ENCODE measurements at regions of chr5 and their contacts with region 1.

Region 1: DNA sequence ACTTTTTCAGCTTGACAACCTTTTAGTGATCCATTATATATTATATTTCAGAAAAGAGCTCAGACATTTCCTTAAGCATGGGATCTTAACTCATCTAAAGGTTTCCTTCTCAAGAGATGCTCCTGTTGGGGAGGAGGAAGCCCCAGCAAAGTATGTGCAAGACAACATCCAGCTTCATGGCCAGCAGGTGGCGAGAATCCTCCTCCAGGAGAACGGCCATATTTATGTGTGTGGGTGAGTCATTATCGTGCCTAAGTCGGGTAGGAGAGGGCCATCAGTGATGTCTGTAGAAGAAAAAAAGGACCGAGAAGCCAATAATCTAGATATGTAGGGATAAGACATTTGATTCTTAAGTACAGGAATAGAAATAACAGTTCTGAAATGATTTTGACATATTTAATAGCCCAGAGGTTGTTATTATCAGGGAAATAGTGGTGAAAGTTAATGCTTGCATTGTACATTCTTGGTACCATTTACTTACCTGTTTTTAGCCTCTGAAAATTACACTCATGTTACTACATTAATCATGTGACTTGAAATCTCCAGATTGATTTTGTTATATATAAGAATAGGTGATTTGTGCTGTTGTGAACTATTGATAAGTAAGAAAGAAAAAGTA is 28.2 kb downstream of the MTRR start:
- DNase-seq: peak; percentile 44
- H3K4me3 ChIP-seq: no peak overlapping the region
- H3K27ac ChIP-seq: no peak overlapping the region
- H3K4me1 ChIP-seq: no peaks in the 10 kb centered on the region
- H3K27me3 ChIP-seq: no peaks in the 10 kb centered on the region
- CTCF ChIP-seq: peak; percentile 47 to 48
- POLR2A ChIP-seq: no peak

Region 2: DNA sequence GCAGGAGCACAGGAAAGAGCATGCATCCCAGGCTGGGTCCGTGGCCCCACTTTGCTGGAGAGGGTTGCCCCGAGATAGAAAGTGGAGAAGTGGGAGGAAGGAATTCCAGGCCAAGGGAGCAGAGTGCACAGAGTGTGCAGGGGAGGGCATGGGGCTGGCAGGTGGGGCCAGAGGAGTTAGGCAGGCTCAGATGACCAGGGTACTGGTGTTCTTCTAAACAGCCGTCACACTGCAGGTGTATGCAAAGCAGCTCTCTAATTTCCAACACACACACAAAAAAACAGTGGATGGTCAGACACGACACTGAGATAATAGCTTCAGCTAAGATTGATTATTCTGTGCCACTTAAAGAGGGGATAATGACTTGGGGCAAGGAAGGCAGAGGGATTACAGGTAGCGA is 184.1 kb after region 1 on chr5:
- CTCF ChIA-PET with region 1: no interaction called
- POLR2A ChIA-PET with region 1: no interaction called
- dilution Hi-C with region 1: no loop called
- intact Hi-C with region 1: no loop called
- DNase-seq: no peak
- H3K4me3 ChIP-seq: no peak overlapping the region
- H3K27ac ChIP-seq: no peak overlapping the region
- H3K4me1 ChIP-seq: no peaks in the 10 kb centered on the region
- H3K27me3 ChIP-seq: no peaks in the 10 kb centered on the region
- CTCF ChIP-seq: no peak
- POLR2A ChIP-seq: no peak

Region 3: GRCh38 chr5:8247049-8247899 is 350.2 kb after region 1 on chr5:
- CTCF ChIA-PET with region 1: no interaction called
- POLR2A ChIA-PET with region 1: no interaction called
- dilution Hi-C with region 1: no loop called
- intact Hi-C with region 1: no loop called
- DNase-seq: no peak
- H3K4me3 ChIP-seq: no peak overlapping the region
- H3K27ac ChIP-seq: no peak overlapping the region
- H3K4me1 ChIP-seq: no peaks in the 10 kb centered on the region
- H3K27me3 ChIP-seq: no peaks in the 10 kb centered on the region
- CTCF ChIP-seq: no peak
- POLR2A ChIP-seq: no peak

Region 4: GRCh38 chr5:8457187-8458037 is 560.3 kb after region 1 on chr5:
- CTCF ChIA-PET with region 1: no interaction called
- POLR2A ChIA-PET with region 1: no interaction called
- dilution Hi-C with region 1: no loop called
- intact Hi-C with region 1: loop called (anchors 10 kb)
- DNase-seq: peak; percentile 99
- H3K4me3 ChIP-seq: peak overlapping the region; percentile 21 to 78 (median 74)
- H3K27ac ChIP-seq: peak overlapping the region; percentile 67
- H3K4me1 ChIP-seq: peaks cover 8% of the 10 kb centered on the region
- H3K27me3 ChIP-seq: no peaks in the 10 kb centered on the region
- CTCF ChIP-seq: no peak
- POLR2A ChIP-seq: peak; percentile 72